H1 (cell line): ENCODE measurements at regions of chr1 and their contacts with region 1.

Region 1: DNA sequence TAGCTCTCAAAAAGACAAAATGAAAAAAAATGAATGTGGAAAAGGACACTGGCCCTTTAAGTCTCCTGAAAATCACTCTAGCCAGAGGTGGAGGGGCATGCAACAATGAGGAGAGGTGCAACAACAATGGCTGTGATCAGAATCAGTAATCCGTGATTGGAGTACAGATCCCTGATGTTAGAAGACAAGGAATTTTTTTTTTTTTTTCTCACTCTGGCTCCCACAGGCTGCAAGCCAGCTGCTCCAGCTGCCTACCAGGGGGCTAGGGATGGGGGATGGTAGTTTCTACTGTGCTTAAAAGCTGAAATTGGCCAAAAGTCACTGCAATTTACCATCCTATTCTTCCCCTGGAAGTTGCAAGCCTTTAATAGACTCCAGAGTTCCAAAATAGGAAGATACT is 54.5 kb downstream of the STYXL2 start:
- DNase-seq: no peak
- H3K4me3 ChIP-seq: peak overlapping the region in 1 of 4 experiments; percentile 15; a peak in 3 of 8 replicates
- H3K27ac ChIP-seq: no peak overlapping the region
- H3K4me1 ChIP-seq: peaks cover 0 to 4% (median 1%) of the 10 kb centered on the region in 4 experiments; a peak in 2 of 7 replicates
- H3K27me3 ChIP-seq: no peaks in the 10 kb centered on the region
- CTCF ChIP-seq: no peak
- EP300 ChIP-seq: no peak
- POLR2A ChIP-seq: no peak
- RAD21 ChIP-seq: no peak

Region 2: DNA sequence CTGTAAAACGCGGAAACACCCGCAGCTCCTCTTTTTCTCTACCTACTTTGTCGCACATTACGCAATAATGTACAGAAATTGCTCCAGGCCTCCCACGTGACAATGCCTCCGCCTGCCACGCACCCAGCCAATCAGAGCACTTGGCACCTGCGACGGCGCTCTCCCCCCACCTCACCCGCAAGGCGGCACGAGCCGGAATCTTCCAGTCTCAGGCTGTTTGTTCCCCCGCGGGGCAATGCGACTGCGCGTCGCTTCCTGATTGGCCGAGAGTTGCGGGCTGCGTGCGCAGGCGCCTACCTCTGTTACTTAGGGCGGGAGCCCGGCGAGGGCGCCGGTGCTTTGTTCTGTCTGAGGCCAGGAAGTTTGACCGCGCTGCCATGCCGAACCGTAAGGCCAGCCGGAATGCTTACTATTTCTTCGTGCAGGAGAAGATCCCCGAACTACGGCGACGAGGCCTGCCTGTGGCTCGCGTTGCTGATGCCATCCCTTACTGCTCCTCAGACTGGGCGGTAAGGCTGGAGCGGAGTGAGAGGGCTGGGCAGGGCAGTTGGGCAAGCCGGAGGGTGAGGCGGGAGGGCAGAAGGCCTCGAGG is 159.3 kb before region 1 on chr1 and contains the start of gene MAEL:
- CTCF ChIA-PET with region 1: no interaction called
- POLR2A ChIA-PET with region 1: no interaction called
- DNase-seq: no peak
- H3K4me3 ChIP-seq: no peak within 1 kb of the TSS
- H3K27ac ChIP-seq: no peak within 1 kb of the TSS
- H3K4me1 ChIP-seq: no peaks in the 10 kb centered on the region
- H3K27me3 ChIP-seq: no peaks in the 10 kb centered on the region; a peak in 1 of 7 replicates
- CTCF ChIP-seq: no peak
- EP300 ChIP-seq: no peak
- POLR2A ChIP-seq: no peak
- RAD21 ChIP-seq: no peak
- total RNA-seq, gene MAEL: not detected in 2 replicates

Region 3: GRCh38 chr1:167043752-167044488 is 104.5 kb before region 1 on chr1:
- CTCF ChIA-PET with region 1: no interaction called
- POLR2A ChIA-PET with region 1: no interaction called
- DNase-seq: no peak
- H3K4me3 ChIP-seq: 0 out of 8 replicates have a peak overlapping the region, but pooled peaks of 1 of the 4 experiments have one; percentile 9
- H3K27ac ChIP-seq: no peak overlapping the region
- H3K4me1 ChIP-seq: peaks cover 0 to 3% (median 0%) of the 10 kb centered on the region in 4 experiments; a peak in 1 of 7 replicates
- H3K27me3 ChIP-seq: no peaks in the 10 kb centered on the region
- CTCF ChIP-seq: no peak
- EP300 ChIP-seq: no peak
- POLR2A ChIP-seq: no peak
- RAD21 ChIP-seq: no peak

Region 4: DNA sequence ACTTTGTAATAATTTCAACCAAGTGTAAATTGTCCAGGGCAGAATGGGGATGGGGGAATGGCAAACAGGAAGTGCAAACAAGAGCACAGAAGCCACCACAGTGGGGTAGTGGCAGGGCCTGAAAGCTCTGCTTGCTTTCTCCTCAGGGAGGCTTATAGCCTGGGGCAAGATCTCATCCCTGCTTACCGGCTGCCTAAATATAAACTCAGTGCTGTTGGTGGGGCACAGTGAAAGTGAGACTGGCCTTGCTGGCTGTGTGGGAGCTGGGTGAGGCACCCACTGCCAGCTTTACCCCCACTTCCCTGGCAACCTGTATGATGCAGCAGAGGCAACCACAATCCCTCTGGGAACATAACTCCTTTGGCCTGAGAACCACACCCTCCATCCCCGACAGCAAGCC is 39.3 kb before region 1 on chr1:
- CTCF ChIA-PET with region 1: no interaction called
- POLR2A ChIA-PET with region 1: no interaction called
- DNase-seq: no peak
- H3K4me3 ChIP-seq: no peak overlapping the region
- H3K27ac ChIP-seq: no peak overlapping the region
- H3K4me1 ChIP-seq: peaks cover 0 to 11% (median 2%) of the 10 kb centered on the region in 4 experiments; a peak in 4 of 7 replicates
- H3K27me3 ChIP-seq: no peaks in the 10 kb centered on the region
- CTCF ChIP-seq: no peak
- EP300 ChIP-seq: no peak
- POLR2A ChIP-seq: no peak
- RAD21 ChIP-seq: no peak

Region 5: DNA sequence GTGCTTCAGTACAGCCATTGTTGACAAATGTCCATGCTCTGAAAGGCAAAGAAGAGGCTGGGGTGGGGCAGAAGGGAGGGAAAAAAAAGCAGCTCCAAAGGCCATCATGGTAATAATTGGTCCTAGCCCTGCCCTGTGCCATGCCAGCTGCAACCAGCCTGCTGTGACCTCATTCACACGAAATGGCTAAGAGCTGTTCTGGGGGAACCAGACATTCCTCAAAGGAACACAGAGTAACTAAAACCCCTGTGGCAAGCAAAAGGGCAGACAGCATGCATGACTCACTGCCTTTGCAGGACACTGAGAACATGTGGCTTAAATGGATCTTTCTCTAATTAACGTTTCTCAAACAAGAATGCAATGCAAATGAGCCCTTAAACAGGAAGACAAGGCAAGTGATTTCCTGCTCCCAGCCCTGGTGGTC is 12.2 kb before region 1 on chr1:
- CTCF ChIA-PET with region 1: interaction called, 6 read pairs
- POLR2A ChIA-PET with region 1: interaction called, 11 read pairs
- DNase-seq: no peak
- H3K4me3 ChIP-seq: no peak overlapping the region
- H3K27ac ChIP-seq: no peak overlapping the region
- H3K4me1 ChIP-seq: peaks cover 2 to 18% (median 11%) of the 10 kb centered on the region in 4 experiments; a peak in 5 of 7 replicates
- H3K27me3 ChIP-seq: no peaks in the 10 kb centered on the region
- CTCF ChIP-seq: no peak
- EP300 ChIP-seq: no peak
- POLR2A ChIP-seq: no peak
- RAD21 ChIP-seq: no peak